GM12878 (cell line): ENCODE measurements at regions of chr5 and their contacts with region 1.

Region 1: GRCh38 chr5:112146323-112147226 is 272.5 kb downstream of the EPB41L4A start:
- DNase-seq: peak; percentile 74
- ATAC-seq: peak; percentile 82
- H3K4me3 ChIP-seq: no peak overlapping the region
- H3K27ac ChIP-seq: no peak overlapping the region; the same call in 1 of the 2 replicates
- H3K4me1 ChIP-seq: peaks cover 13% of the 10 kb centered on the region; the same call in 1 of the 2 replicates
- H3K27me3 ChIP-seq: no peaks in the 10 kb centered on the region
- CTCF ChIP-seq: peak; percentile 59 to 89 (median 67); a peak in 5 of 6 replicates
- EP300 ChIP-seq: 0 out of 4 replicates have a peak, but pooled peaks of 1 of the 2 experiments have one; percentile 36
- POLR2A ChIP-seq: no peak
- RAD21 ChIP-seq: peak; percentile 99

Region 2: GRCh38 chr5:111158105-111158744 is 988.4 kb before region 1 on chr5:
- CTCF ChIA-PET with region 1: interaction called, 30 read pairs
- POLR2A ChIA-PET with region 1: no interaction called
- RAD21 ChIA-PET with region 1: interaction called, 8 read pairs
- SMC1A ChIA-PET with region 1: interaction called, 6 read pairs
- in situ Hi-C with region 1: loop called (anchors 10 kb)
- intact Hi-C with region 1: loop called (anchors 1 kb)
- DNase-seq: peak; percentile 64
- ATAC-seq: peak; percentile 93
- H3K4me3 ChIP-seq: no peak overlapping the region
- H3K27ac ChIP-seq: no peak overlapping the region
- H3K4me1 ChIP-seq: no peaks in the 10 kb centered on the region
- H3K27me3 ChIP-seq: no peaks in the 10 kb centered on the region
- CTCF ChIP-seq: peak; percentile 99 to 100 (median 100); a peak in 5 of 6 replicates
- EP300 ChIP-seq: no peak
- POLR2A ChIP-seq: no peak
- RAD21 ChIP-seq: peak; percentile 99

Region 3: DNA sequence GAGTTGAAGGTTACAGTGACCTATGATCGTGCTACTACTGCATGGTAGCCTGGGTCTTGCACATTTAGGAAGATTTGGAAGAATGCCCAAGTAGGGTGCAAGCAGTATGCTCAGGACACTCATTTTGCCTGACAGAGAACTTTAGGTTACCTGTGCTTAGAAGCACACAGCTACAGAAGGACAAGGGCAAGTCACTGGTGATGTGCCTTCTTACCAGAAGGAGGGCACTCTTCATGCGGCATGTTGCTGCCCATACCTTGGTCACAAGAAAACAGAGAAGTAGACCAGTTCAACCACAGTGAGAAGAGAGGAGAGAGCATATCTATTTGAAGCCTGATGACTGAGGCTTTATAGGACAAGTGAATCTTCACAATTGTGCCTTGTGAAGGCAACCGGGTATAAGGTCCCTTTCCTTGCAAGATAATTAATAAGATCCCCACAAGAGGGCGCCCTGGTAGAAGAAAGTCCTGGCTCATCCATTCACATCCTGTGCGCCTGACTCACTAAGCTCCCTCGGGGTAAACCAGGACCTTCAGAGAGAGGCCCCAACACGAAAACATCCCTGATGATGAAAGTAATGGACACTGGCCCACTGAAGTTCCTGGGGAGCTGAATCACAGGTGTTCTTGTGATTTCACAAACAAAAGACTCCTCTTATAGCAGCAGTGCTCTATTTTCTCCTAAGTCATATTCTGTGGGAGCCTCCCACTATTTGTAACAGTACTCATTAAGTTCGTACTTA is 596.1 kb before region 1 on chr5:
- CTCF ChIA-PET with region 1: interaction called, 108 read pairs
- POLR2A ChIA-PET with region 1: no interaction called
- RAD21 ChIA-PET with region 1: interaction called, 62 read pairs
- SMC1A ChIA-PET with region 1: interaction called, 93 read pairs
- in situ Hi-C with region 1: loop called (anchors 5 kb)
- intact Hi-C with region 1: loop called (anchors 1 kb)
- DNase-seq: peak; percentile 50
- ATAC-seq: peak; percentile 99
- H3K4me3 ChIP-seq: no peak overlapping the region
- H3K27ac ChIP-seq: no peak overlapping the region
- H3K4me1 ChIP-seq: no peaks in the 10 kb centered on the region
- H3K27me3 ChIP-seq: no peaks in the 10 kb centered on the region
- CTCF ChIP-seq: peak; percentile 50 to 76 (median 56)
- EP300 ChIP-seq: no peak
- POLR2A ChIP-seq: no peak
- RAD21 ChIP-seq: peak; percentile 91

Region 4: DNA sequence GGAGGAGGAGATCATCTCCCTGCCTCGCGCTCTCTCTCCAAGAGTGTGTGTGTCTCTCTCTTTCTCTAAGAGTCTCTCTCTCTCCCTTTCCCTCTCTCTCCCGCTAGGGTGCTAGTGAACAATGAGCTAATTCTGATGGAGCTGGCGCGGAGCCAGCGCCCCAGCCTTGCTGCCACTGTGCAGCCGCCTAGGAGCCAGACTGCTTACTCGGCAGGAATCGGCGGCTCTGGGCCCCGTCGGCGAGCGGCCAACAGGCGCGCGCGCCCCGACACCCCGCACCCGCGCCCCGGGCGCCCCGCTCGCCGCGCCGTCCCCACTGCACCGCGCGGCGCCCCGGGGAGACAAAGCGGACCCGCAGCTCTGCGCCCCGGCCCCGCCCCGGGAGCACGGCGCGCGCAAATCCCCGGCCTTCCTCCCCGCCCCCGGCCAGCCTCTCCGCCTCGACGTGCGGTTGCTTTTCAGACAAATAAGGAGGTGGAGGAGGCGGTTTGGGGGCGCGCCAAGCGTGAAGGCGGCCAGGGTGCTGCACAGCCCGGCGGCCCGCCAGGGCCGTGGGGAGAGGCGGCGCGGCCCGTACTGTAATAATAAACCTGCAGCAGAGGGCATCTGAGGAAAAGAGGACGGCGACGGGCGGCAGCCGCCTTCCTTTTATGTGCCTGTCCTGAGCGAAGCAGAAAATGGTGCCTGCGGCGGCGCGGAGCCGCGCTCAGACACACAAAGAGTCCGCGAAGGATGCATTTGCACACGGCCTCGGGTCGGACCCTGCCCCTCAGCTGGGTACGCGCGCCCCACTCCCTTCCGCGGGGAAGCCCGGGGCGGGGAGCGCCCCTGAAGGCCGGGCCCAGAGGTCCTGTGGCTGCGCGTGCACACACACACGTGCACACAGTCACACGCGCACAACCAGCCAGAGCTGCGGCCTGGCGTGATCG is 389.0 kb before region 1 on chr5:
- CTCF ChIA-PET with region 1: interaction called, 5 read pairs
- POLR2A ChIA-PET with region 1: no interaction called
- RAD21 ChIA-PET with region 1: interaction called, 8 read pairs
- SMC1A ChIA-PET with region 1: interaction called, 18 read pairs
- in situ Hi-C with region 1: no loop called
- intact Hi-C with region 1: loop called (anchors 1 kb)
- DNase-seq: peak; percentile 66
- ATAC-seq: peak; percentile 85
- H3K4me3 ChIP-seq: peak overlapping the region; percentile 68
- H3K27ac ChIP-seq: peak overlapping the region; percentile 88
- H3K4me1 ChIP-seq: peaks cover 9% of the 10 kb centered on the region; the same call in 1 of the 2 replicates
- H3K27me3 ChIP-seq: no peaks in the 10 kb centered on the region
- CTCF ChIP-seq: peak in 2 of 3 experiments; percentile 29 to 58; a peak in 4 of 6 replicates
- EP300 ChIP-seq: no peak
- POLR2A ChIP-seq: peak; percentile 70
- RAD21 ChIP-seq: 0 out of 2 replicates have a peak, but pooled peaks have one; percentile 22

Region 5: DNA sequence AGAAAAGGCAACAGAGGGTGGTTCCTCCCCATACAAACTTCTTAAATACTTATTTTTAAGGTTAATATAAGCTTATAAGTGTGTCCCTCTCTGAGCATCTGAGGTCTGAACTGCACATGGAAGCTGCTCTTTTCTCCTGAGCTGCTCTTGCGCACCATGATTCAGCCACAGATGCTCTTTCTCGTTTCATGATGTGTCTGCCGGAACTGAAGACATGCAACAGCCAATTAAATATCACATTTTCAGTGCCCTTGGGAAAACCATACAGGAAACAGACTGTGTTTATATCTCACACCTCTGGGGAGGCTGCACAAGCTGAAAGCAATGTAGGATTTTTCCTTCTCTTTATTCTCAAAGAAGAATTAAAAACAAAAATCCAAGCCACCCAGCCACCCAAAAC is 292.8 kb before region 1 on chr5:
- CTCF ChIA-PET with region 1: interaction called, 8 read pairs
- POLR2A ChIA-PET with region 1: no interaction called
- RAD21 ChIA-PET with region 1: interaction called, 11 read pairs
- SMC1A ChIA-PET with region 1: interaction called, 8 read pairs
- in situ Hi-C with region 1: no loop called
- intact Hi-C with region 1: no loop called
- DNase-seq: peak; percentile 41
- ATAC-seq: peak; percentile 88
- H3K4me3 ChIP-seq: no peak overlapping the region
- H3K27ac ChIP-seq: no peak overlapping the region
- H3K4me1 ChIP-seq: no peaks in the 10 kb centered on the region
- H3K27me3 ChIP-seq: no peaks in the 10 kb centered on the region
- CTCF ChIP-seq: no peak
- EP300 ChIP-seq: no peak
- POLR2A ChIP-seq: no peak
- RAD21 ChIP-seq: no peak

Region 6: DNA sequence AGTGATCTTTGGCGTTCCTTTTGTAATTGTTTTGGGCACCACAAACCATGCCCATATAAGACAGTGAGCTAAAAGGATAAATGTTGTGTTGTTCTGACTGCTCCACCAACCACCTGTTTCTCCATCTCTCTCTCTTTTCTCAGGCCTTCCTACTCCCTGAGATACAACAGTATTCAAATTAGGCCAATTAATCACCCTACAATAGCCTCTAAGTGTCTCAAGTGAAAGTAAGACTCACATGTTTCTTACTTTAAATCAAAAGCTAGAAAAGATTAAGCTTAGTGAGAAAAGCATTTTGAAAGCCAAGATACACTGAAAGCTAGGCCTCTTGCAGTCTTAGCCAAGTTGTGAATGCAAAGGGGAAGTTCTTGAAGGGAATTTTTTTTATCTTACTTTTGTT is 120.8 kb before region 1 on chr5:
- CTCF ChIA-PET with region 1: interaction called, 3 read pairs
- POLR2A ChIA-PET with region 1: no interaction called
- RAD21 ChIA-PET with region 1: interaction called, 5 read pairs
- SMC1A ChIA-PET with region 1: interaction called, 13 read pairs
- in situ Hi-C with region 1: no loop called
- intact Hi-C with region 1: no loop called
- DNase-seq: peak; percentile 58
- ATAC-seq: peak; percentile 92
- H3K4me3 ChIP-seq: no peak overlapping the region
- H3K27ac ChIP-seq: no peak overlapping the region
- H3K4me1 ChIP-seq: no peaks in the 10 kb centered on the region
- H3K27me3 ChIP-seq: no peaks in the 10 kb centered on the region
- CTCF ChIP-seq: no peak
- EP300 ChIP-seq: 0 out of 4 replicates have a peak, but pooled peaks of 1 of the 2 experiments have one; percentile 8
- POLR2A ChIP-seq: no peak
- RAD21 ChIP-seq: no peak

Region 7: DNA sequence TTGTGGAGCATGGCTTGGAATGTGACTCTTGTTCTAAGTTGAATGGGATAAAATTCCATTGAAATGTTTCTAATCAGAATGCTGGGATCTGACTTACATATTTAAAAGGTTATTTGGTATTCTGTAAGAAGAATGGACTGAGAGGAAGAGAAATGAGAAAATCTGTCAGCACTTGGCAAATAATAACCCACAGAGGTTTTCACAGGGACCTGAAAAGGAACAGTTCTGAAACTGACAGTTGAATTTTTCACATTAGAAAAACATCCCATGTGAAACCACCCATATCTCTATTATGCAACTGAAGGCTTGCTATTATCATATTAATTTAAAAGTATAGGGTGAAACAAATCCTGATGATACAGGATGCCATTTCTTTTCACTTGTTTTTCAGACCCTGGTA is 30.2 kb before region 1 on chr5:
- CTCF ChIA-PET with region 1: interaction called, 6 read pairs
- POLR2A ChIA-PET with region 1: no interaction called
- RAD21 ChIA-PET with region 1: interaction called, 5 read pairs
- SMC1A ChIA-PET with region 1: interaction called, 18 read pairs
- in situ Hi-C with region 1: no loop called
- intact Hi-C with region 1: no loop called
- DNase-seq: peak; percentile 66
- ATAC-seq: peak; percentile 80
- H3K4me3 ChIP-seq: 0 out of 2 replicates have a peak overlapping the region, but pooled peaks have one; percentile 8
- H3K27ac ChIP-seq: peak overlapping the region; percentile 58
- H3K4me1 ChIP-seq: peaks cover 24% of the 10 kb centered on the region
- H3K27me3 ChIP-seq: no peaks in the 10 kb centered on the region
- CTCF ChIP-seq: no peak
- EP300 ChIP-seq: peak in 1 of 2 experiments; percentile 82; a peak in 1 of 4 replicates
- POLR2A ChIP-seq: no peak
- RAD21 ChIP-seq: no peak

Region 8: DNA sequence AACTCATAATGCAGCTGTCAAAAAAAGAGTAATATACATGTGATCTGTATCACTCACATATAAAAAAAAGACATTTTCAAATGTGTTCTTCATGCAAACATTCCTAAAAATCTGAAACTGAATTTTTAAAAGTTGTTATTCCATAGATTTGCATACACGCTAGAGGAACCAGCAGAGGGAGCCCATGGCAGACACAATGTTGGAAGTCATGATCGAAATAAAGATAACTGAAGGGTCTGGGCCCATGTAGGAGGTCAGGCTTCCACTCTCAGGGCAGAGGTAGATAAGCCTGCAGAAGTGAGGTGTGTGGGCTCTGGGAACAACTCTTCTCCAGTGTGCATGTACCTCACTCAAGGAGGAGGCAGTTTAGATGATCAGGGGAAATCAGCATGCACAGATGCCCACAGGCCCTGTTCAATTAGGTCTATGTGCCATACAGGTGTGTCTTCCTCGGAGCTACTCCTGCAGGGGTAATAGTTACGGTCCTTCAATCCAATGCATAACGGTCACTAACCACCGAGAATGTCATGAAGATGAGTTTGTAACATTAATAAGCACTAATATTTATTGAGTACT is 63.9 kb after region 1 on chr5:
- CTCF ChIA-PET with region 1: no interaction called
- POLR2A ChIA-PET with region 1: no interaction called
- RAD21 ChIA-PET with region 1: no interaction called
- SMC1A ChIA-PET with region 1: no interaction called
- in situ Hi-C with region 1: no loop called
- intact Hi-C with region 1: no loop called
- DNase-seq: no peak
- ATAC-seq: peak; percentile 32; the same call in 2 of the 3 replicates
- H3K4me3 ChIP-seq: no peak overlapping the region
- H3K27ac ChIP-seq: no peak overlapping the region
- H3K4me1 ChIP-seq: no peaks in the 10 kb centered on the region
- H3K27me3 ChIP-seq: no peaks in the 10 kb centered on the region
- CTCF ChIP-seq: peak; percentile 44 to 50 (median 48); a peak in 5 of 6 replicates
- EP300 ChIP-seq: no peak
- POLR2A ChIP-seq: no peak
- RAD21 ChIP-seq: peak; percentile 58